ENCODE measurements at regions of chr3 and their contacts with region 1.

Region 1: GRCh38 chr3:192957441-192958021 is 39.9 kb upstream of the MB21D2 start:
- DNase-seq: no peak
- H3K4me3 Mint-ChIP-seq: no peak overlapping the region
- H3K27ac Mint-ChIP-seq: peak overlapping the region; percentile 64
- H3K4me1 Mint-ChIP-seq: peaks cover 25% of the 10 kb centered on the region
- H3K27me3 Mint-ChIP-seq: no peaks in the 10 kb centered on the region

Region 2: GRCh38 chr3:192899540-192899982 is 58.0 kb before region 1 on chr3:
- intact Hi-C with region 1: loop called (anchors 1 kb)
- DNase-seq: no peak
- H3K4me3 Mint-ChIP-seq: no peak overlapping the region
- H3K27ac Mint-ChIP-seq: peak overlapping the region; percentile 79
- H3K4me1 Mint-ChIP-seq: peaks cover 55% of the 10 kb centered on the region
- H3K27me3 Mint-ChIP-seq: peaks cover 12% of the 10 kb centered on the region

Region 3: GRCh38 chr3:192933779-192934460 is 23.6 kb before region 1 on chr3:
- intact Hi-C with region 1: loop called (anchors 1 kb)
- DNase-seq: no peak
- H3K4me3 Mint-ChIP-seq: no peak overlapping the region
- H3K27ac Mint-ChIP-seq: peak overlapping the region; percentile 91
- H3K4me1 Mint-ChIP-seq: peaks cover 14% of the 10 kb centered on the region
- H3K27me3 Mint-ChIP-seq: peaks cover 2% of the 10 kb centered on the region